Breast epithelium (tissue), 4 donors: ENCODE measurements at regions of chr5 and their contacts with region 1.

Region 1: DNA sequence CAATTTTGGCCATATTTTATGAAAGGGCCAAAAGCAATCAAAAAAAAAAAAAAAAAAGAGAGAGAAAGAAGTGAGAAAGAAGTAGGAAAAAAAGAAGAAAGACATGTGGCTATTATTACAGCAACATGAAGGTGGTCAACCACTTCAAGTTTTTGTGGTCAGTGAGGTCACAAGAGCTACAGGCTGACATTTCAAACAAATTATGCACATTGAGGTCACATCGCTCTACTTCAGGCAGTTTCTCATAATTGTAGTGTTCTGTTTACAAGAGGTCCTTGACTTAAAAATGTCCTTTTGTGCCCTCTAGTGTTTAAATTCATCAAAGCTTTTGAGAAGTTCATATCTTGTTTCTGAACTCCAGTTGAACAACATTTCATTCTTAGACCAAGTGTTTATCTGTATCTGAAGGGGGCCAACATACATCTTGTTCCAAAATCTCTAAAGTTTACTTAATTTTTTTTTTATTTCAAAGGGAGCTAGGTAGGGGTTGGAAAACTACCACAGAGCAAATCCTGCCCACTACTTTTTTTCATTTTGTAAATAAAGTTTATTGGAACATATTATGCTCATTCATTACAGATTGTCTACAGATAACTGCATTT is 513.1 kb downstream of the PDE4D start:
- DNase-seq: no peak
- H3K4me3 ChIP-seq: no peak overlapping the region
- H3K27ac ChIP-seq: no peak overlapping the region
- H3K4me1 ChIP-seq: no peaks in the 10 kb centered on the region
- H3K27me3 ChIP-seq: no peaks in the 10 kb centered on the region
- CTCF ChIP-seq: peak in 2 of 3 donors; percentile 25 to 43
- POLR2A ChIP-seq: no peak

Region 2: GRCh38 chr5:59193616-59194319 is 186.7 kb before region 1 on chr5:
- intact Hi-C with region 1: loop called (anchors 10 kb)
- DNase-seq: no peak
- H3K4me3 ChIP-seq: no peak overlapping the region
- H3K27ac ChIP-seq: no peak overlapping the region
- H3K4me1 ChIP-seq: no peaks in the 10 kb centered on the region
- H3K27me3 ChIP-seq: no peaks in the 10 kb centered on the region
- CTCF ChIP-seq: no peak
- POLR2A ChIP-seq: no peak

Region 3: GRCh38 chr5:59673438-59674058 is 293.1 kb after region 1 on chr5:
- intact Hi-C with region 1: loop called (anchors 10 kb)
- DNase-seq: no peak
- H3K4me3 ChIP-seq: no peak overlapping the region
- H3K27ac ChIP-seq: no peak overlapping the region
- H3K4me1 ChIP-seq: no peaks in the 10 kb centered on the region
- H3K27me3 ChIP-seq: no peaks in the 10 kb centered on the region
- CTCF ChIP-seq: peak; percentile 66 to 75 (median 73)
- POLR2A ChIP-seq: no peak

Region 4: DNA sequence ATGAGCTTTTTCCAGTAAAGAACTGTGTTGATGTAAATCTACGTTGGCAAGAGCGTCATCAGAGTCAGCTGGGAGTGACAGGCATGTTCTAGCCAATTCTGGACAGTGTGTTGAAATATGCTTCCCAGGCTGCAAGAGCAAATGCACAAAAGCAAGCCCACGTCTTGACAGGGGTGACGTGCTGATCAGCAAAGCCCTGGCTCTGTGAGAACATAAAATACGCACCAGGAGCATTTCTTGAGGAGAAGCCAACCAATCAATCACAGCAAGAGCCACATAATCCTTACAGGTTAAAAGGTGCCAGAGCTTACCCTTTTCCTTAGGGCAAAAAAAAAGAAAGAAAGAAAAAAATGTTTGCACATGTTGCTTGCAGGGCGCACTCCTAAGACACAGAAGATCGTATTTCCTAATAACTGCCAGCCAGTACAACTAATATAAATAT is 365.0 kb after region 1 on chr5:
- intact Hi-C with region 1: no loop called
- DNase-seq: no peak
- H3K4me3 ChIP-seq: no peak overlapping the region
- H3K27ac ChIP-seq: no peak overlapping the region
- H3K4me1 ChIP-seq: no peaks in the 10 kb centered on the region
- H3K27me3 ChIP-seq: no peaks in the 10 kb centered on the region
- CTCF ChIP-seq: no peak
- POLR2A ChIP-seq: no peak